HEK293 (cell line): ENCODE measurements at regions of chr7 and their contacts with region 1.

Region 1: GRCh38 chr7:25158966-25159365 is 33.9 kb upstream of the CYCS start:
- H3K4me3 ChIP-seq: no peak overlapping the region
- H3K27ac ChIP-seq: no peak overlapping the region
- H3K4me1 ChIP-seq: no peaks in the 10 kb centered on the region
- CTCF ChIP-seq: no peak

Region 2: DNA sequence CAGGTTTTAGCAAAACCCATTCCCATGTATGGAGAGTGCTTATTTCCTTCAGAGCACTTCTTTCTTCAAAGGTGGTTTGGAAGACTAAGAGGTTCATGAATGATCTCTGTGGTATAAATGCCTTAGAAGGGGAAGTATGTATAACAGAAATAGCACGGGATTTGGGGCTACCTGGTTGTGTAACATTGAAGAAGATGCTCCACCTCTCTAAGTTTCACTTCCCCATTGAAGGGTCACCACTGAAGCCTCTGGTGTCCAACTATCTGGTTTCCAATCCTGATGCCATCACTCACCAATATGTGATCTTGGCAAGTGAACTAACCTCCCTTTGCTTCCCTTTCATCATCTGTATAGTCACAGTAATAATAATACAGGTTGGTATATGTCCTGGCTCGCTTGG is 71.1 kb before region 1 on chr7:
- CTCF ChIA-PET with region 1: no interaction called
- POLR2A ChIA-PET with region 1: no interaction called
- H3K4me3 ChIP-seq: no peak overlapping the region
- H3K27ac ChIP-seq: no peak overlapping the region
- H3K4me1 ChIP-seq: no peaks in the 10 kb centered on the region
- CTCF ChIP-seq: no peak

Region 3: GRCh38 chr7:25109276-25109675 is 49.7 kb before region 1 on chr7:
- CTCF ChIA-PET with region 1: no interaction called
- POLR2A ChIA-PET with region 1: no interaction called
- H3K4me3 ChIP-seq: no peak overlapping the region
- H3K27ac ChIP-seq: no peak overlapping the region
- H3K4me1 ChIP-seq: no peaks in the 10 kb centered on the region
- CTCF ChIP-seq: no peak

Region 4: DNA sequence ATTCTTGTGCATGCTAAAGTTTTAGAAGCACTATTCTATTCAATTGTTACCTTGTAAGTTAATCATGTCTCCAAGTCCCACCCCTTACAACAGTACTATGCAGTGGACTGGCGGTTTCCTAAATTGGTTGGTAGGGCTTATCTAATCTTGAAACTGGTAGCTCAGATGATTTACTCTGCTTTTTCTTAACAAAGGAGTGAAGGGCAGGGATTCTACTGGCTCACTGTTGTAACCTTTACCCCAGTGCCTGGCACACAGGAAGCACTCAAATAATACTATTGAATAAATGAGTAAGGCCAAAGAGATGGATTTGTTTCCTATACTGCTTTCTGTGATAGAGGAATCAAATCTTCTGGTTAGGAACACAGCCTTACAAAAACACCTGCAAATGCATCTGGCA is 12.1 kb after region 1 on chr7:
- CTCF ChIA-PET with region 1: interaction called, 12 read pairs
- POLR2A ChIA-PET with region 1: no interaction called
- H3K4me3 ChIP-seq: no peak overlapping the region
- H3K27ac ChIP-seq: no peak overlapping the region
- H3K4me1 ChIP-seq: peaks cover 14% of the 10 kb centered on the region
- CTCF ChIP-seq: no peak